Motor neuron (in vitro differentiated cells): ENCODE measurements at regions of chr11 and their contacts with region 1.

Region 1: DNA sequence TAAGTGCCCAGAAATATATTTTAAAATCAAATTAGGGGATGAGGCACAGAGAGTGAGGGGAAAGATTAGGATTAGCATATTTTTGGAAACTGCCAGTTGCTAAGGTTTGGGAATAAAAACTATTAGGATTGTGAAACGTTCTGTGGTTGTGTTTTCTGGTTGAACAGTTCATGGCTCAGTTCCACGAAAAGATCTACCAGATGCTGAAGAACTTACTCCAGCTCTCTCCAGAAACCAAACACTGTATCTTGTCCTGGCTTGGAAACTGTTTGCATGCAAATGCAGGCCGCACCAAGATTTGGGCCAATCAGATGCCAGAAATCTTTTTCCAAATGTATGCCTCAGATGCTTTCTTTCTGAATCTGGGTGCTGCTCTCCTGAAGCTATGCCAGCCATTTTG is 15.3 kb downstream of the UBE4A start:
- ATAC-seq: peak in 1 of 8 experiments; percentile 57
- H3K4me3 ChIP-seq: no peak overlapping the region
- H3K27ac ChIP-seq: no peak overlapping the region
- H3K4me1 ChIP-seq: no peaks in the 10 kb centered on the region

Region 2: GRCh38 chr11:118497831-118498230 is 123.1 kb after region 1 on chr11:
- in situ Hi-C with region 1: loop called in 6 of 9 experiments (anchors 10 to 25 kb)
- ATAC-seq: peak in 2 of 8 experiments; percentile 54 to 62
- H3K4me3 ChIP-seq: no peak overlapping the region
- H3K27ac ChIP-seq: no peak overlapping the region
- H3K4me1 ChIP-seq: no peaks in the 10 kb centered on the region